Testis (tissue), 5 donors: ENCODE measurements at regions of chr13 and their contacts with region 1.

Region 1: DNA sequence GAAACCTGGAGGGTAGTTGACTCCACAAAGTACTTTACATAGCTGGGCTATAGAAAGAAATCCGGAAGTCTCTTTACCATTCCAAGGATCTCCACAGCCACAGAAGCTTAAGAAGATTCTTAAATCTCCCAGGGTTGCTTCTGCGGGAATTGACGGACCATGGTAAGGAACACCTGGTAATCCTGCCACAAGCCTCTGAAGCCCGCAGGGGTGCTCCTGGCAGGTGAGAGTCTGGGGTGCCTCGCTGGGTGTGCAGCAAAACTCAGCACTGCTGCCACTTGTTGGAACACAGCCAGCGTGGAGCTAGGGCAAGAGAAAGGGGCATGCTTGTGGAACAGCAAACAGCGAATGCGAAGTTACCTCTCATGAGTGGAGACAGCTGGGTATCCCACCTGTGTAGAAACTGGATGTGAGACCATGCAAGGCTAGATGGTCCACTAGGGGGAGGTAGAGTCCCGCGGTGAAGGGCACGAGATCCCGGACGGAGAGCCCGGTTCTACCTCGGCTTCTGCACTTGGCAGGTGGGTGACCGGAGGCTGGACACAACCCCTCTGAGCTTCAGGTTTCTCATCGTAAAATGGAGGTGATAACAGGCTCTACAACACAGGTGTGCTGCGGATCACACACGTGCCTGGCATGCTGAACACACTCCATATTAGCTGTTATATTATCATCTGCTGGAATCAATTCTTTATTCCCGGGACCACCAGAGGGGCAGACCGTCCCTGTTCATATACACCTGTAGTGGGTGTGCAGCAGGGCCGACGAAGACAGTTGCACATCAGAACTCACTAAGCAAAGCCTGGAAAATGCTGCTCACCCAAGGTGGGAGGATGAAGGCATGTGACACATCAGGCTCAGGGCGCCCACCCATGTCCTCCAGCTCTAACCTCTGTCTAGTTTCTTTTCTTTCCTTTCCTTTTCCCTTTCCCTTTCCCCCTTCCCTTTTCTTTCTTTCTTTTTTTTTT is 24.1 kb upstream of the UBAC2 start:
- DNase-seq: peak; percentile 85
- H3K4me3 ChIP-seq: no peak overlapping the region
- H3K27ac ChIP-seq: no peak overlapping the region
- H3K4me1 ChIP-seq: no peaks in the 10 kb centered on the region
- H3K27me3 ChIP-seq: no peaks in the 10 kb centered on the region
- CTCF ChIP-seq: peak; percentile 65 to 85 (median 72)
- POLR2A ChIP-seq: no peak

Region 2: GRCh38 chr13:97512731-97513130 is 1663.9 kb before region 1 on chr13:
- intact Hi-C with region 1: no loop called
- DNase-seq: no peak
- H3K4me3 ChIP-seq: no peak overlapping the region
- H3K27ac ChIP-seq: no peak overlapping the region
- H3K4me1 ChIP-seq: no peaks in the 10 kb centered on the region
- H3K27me3 ChIP-seq: no peaks in the 10 kb centered on the region
- CTCF ChIP-seq: no peak
- POLR2A ChIP-seq: no peak

Region 3: GRCh38 chr13:98206946-98207345 is 969.6 kb before region 1 on chr13:
- intact Hi-C with region 1: no loop called
- DNase-seq: no peak
- H3K4me3 ChIP-seq: no peak overlapping the region
- H3K27ac ChIP-seq: no peak overlapping the region
- H3K4me1 ChIP-seq: no peaks in the 10 kb centered on the region
- H3K27me3 ChIP-seq: no peaks in the 10 kb centered on the region
- CTCF ChIP-seq: no peak
- POLR2A ChIP-seq: no peak

Region 4: DNA sequence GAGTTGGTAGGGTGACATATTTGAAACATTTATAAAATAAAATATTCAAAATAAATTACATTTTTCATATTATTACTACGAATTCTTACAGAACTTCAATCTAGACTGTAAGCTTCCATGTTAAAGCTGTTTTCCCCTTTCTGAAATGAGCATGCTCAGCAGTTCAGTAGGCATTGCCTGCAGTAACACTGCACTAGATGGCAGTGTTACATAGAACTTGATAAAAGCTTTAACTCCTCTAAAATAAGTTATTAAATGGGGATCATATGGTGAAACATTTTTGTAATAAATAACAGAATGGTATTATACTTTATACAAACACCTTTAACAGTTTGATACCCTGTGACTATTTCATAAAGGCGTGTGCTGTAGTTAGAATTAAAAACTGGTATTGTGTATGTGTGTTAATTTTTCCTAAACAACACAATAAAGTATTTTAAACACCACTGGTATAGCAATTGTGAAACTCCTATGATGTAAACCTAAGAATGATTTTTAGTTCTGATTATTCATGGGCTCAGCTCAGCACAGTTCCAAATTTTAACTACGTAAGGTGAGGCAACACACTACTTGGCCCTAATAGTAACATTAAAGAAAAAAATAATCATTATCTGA is 93.1 kb after region 1 on chr13:
- intact Hi-C with region 1: loop called (anchors 5 kb)
- DNase-seq: no peak
- H3K4me3 ChIP-seq: no peak overlapping the region
- H3K27ac ChIP-seq: peak overlapping the region in 1 of 2 donors; percentile 41
- H3K4me1 ChIP-seq: peaks cover 15% of the 10 kb centered on the region
- H3K27me3 ChIP-seq: no peaks in the 10 kb centered on the region
- CTCF ChIP-seq: peak; percentile 62 to 84 (median 68)
- POLR2A ChIP-seq: no peak

Region 5: GRCh38 chr13:99307648-99308339 is 131.2 kb after region 1 on chr13:
- intact Hi-C with region 1: no loop called
- DNase-seq: no peak
- H3K4me3 ChIP-seq: no peak overlapping the region
- H3K27ac ChIP-seq: peak overlapping the region in 1 of 2 donors; percentile 25
- H3K4me1 ChIP-seq: no peaks in the 10 kb centered on the region
- H3K27me3 ChIP-seq: no peaks in the 10 kb centered on the region
- CTCF ChIP-seq: no peak
- POLR2A ChIP-seq: no peak

Region 6: DNA sequence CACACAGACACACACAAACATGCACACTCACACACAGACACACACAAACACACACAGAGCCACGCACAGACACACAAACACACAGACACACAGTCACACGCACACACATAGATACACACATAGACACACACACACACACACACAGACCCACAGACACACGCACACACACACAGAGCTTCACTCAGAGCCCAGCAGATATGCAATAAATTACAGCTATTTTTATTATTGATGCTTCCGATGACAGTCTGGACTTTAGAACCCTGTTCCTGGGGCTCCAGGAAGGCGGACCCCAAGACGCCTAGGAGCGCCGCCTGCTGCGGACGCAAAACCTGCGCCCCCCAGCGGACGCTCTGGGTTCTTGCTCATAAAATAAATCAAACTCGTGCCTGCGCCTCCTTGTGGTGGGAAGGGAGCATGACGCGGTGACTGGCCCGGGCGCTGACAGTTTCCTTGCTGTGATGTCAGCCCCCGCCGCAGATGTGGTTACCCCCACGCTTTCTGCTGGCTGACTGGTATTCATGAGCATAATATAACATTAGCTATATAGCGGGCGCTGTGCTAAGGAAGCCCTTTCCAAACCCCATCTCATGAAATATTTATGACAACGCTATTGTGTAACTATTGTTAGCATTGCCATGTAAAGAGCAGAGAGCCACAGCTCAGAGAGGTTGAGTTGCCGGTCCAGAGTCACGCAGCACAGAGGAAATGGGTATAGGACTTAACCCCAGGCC is 260.3 kb after region 1 on chr13:
- intact Hi-C with region 1: loop called (anchors 10 kb)
- DNase-seq: peak; percentile 94
- H3K4me3 ChIP-seq: no peak overlapping the region
- H3K27ac ChIP-seq: no peak overlapping the region
- H3K4me1 ChIP-seq: peaks cover 6% of the 10 kb centered on the region
- H3K27me3 ChIP-seq: no peaks in the 10 kb centered on the region
- CTCF ChIP-seq: peak; percentile 99 to 100 (median 99)
- POLR2A ChIP-seq: no peak